ENCODE measurements at regions of chr2 and their contacts with region 1.

Region 1: GRCh38 chr2:168246483-168247340 is 683 bp downstream of the STK39 start:
- DNase-seq: peak; percentile 43 to 55 (median 45)
- H3K4me3 ChIP-seq: peak overlapping the region; percentile 56 to 85 (median 61)
- H3K4me3 Mint-ChIP-seq: peak overlapping the region; percentile 86 to 93
- H3K27ac ChIP-seq: peak overlapping the region in 1 of 2 donors; percentile 49
- H3K27ac Mint-ChIP-seq: peak overlapping the region in 5 of 7 donors; percentile 33 to 88 (median 46)
- H3K4me1 ChIP-seq: peaks cover 22 to 27% of the 10 kb centered on the region in 2 donors
- H3K4me1 Mint-ChIP-seq: peaks cover 31% of the 10 kb centered on the region
- H3K27me3 ChIP-seq: peaks cover 5 to 10% of the 10 kb centered on the region in 2 donors
- H3K27me3 Mint-ChIP-seq: peaks cover 5 to 14% (median 6%) of the 10 kb centered on the region in 3 donors
- CTCF ChIP-seq: peak; percentile 51

Region 2: DNA sequence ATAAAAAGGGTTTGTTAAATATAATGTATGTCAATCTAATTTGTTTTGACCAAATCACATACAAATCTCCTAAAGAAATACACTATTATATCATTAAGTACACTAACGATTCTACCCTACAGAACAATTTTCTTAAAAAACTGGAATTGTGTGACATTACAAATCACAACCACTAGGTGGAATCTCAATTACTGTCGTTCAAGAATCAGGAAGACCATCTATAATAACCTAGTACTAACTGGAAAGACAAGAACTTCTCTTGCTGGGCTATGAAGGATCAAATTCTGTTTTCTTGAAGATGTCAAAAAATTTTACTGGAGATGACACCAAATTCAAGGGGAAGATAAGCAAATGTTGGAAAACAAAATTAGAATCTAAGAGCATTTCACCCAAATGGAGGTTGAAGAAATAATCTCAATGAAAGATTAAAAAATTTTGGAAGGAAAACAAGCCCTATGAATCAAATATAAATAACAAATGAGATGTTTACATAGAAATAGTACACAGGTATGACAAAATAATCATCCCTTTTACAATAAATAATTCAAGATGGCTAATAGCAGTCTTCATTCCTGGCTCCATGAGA is 110.2 kb before region 1 on chr2:
- intact Hi-C with region 1: loop called in 1 of 2 experiments (anchors 10 kb)
- DNase-seq: peak in 2 of 3 donors; percentile 32 to 53
- H3K4me3 ChIP-seq: no peak overlapping the region
- H3K4me3 Mint-ChIP-seq: no peak overlapping the region
- H3K27ac ChIP-seq: no peak overlapping the region
- H3K27ac Mint-ChIP-seq: no peak overlapping the region
- H3K4me1 ChIP-seq: no peaks in the 10 kb centered on the region
- H3K4me1 Mint-ChIP-seq: peaks cover 4% of the 10 kb centered on the region
- H3K27me3 ChIP-seq: no peaks in the 10 kb centered on the region
- H3K27me3 Mint-ChIP-seq: no peaks in the 10 kb centered on the region
- CTCF ChIP-seq: peak; percentile 81

Region 3: GRCh38 chr2:168160897-168161296 is 85.8 kb before region 1 on chr2:
- intact Hi-C with region 1: loop called in 1 of 2 experiments (anchors 10 kb)
- DNase-seq: no peak
- H3K4me3 ChIP-seq: no peak overlapping the region
- H3K4me3 Mint-ChIP-seq: no peak overlapping the region
- H3K27ac ChIP-seq: no peak overlapping the region
- H3K27ac Mint-ChIP-seq: no peak overlapping the region
- H3K4me1 ChIP-seq: peaks cover 15 to 21% of the 10 kb centered on the region in 2 donors
- H3K4me1 Mint-ChIP-seq: peaks cover 26% of the 10 kb centered on the region
- H3K27me3 ChIP-seq: no peaks in the 10 kb centered on the region
- H3K27me3 Mint-ChIP-seq: no peaks in the 10 kb centered on the region
- CTCF ChIP-seq: no peak

Region 4: DNA sequence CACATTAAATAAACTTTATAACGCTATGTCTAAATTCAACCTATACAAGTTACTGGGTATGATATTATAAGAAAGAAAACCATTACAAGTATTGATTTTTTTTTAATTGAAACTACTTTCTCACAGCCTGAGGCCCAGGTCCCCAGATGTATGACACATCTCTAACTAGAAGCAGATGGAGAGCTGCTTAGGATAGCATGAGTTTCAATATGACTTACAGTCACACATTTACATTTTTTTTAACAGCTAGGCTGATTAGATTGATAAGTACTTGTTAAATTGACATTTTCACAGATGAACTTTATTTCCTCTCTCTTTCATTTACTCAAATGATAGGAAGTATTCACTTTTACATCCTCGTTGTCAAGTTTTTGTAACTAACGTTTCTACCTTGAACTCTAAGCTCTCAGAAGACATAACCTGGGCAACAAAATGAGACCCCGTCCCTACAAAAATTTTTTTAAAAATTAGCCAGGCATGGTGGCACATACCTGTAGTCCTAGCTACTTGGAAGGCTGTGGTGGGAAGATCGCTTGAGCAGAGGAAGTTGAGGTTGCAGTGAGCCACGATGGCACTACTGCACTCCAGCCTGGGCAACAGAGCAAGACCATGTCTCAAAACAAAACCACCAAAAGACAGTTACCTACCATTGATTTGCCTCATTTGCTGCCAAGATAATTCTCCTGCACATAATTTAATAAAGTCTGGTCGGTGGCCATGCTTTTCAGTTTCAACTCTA is 51.8 kb before region 1 on chr2:
- intact Hi-C with region 1: no loop called
- DNase-seq: no peak
- H3K4me3 ChIP-seq: no peak overlapping the region
- H3K4me3 Mint-ChIP-seq: no peak overlapping the region
- H3K27ac ChIP-seq: no peak overlapping the region
- H3K27ac Mint-ChIP-seq: peak overlapping the region in 1 of 7 donors; percentile 73
- H3K4me1 ChIP-seq: peaks cover 12 to 19% of the 10 kb centered on the region in 2 donors
- H3K4me1 Mint-ChIP-seq: peaks cover 36% of the 10 kb centered on the region
- H3K27me3 ChIP-seq: no peaks in the 10 kb centered on the region
- H3K27me3 Mint-ChIP-seq: no peaks in the 10 kb centered on the region
- CTCF ChIP-seq: no peak

Region 5: DNA sequence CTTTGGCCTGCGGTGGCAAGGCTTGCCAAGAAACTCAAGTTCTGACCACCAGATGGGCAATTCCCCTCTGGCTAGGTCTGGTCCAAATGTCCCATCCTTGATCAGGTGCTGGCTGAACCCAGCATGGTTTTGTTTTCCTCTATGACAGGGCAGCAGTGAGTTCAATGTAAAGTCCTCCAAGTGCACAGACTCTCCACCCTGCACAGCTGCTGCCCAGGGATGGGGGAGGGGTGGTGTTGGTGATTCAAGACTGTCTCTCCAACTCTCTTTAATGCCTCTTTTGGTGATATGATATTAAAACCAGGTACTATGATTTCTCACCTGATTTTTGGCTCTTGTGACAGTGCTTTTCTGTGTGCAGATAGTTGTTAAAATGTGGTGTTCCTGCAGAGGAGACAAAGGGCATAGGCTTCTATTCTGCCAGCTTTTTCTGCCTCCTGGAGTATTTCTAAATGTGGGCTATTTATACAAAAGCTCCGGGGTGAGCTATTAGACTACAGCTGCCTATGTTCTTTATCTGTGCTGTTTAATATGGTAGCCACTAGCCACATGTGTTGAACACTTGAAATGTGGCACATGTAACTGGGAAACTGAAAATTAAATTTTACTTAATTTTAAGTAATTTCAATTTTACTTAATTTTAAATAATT is 64.7 kb after region 1 on chr2:
- intact Hi-C with region 1: no loop called
- DNase-seq: no peak
- H3K4me3 ChIP-seq: no peak overlapping the region
- H3K4me3 Mint-ChIP-seq: no peak overlapping the region
- H3K27ac ChIP-seq: no peak overlapping the region
- H3K27ac Mint-ChIP-seq: no peak overlapping the region
- H3K4me1 ChIP-seq: no peaks in the 10 kb centered on the region
- H3K4me1 Mint-ChIP-seq: no peaks in the 10 kb centered on the region
- H3K27me3 ChIP-seq: no peaks in the 10 kb centered on the region
- H3K27me3 Mint-ChIP-seq: peaks cover 0 to 1% (median 0%) of the 10 kb centered on the region in 3 donors
- CTCF ChIP-seq: no peak

Measured in CD14-positive monocyte (primary cell).